ENCODE measurements at regions of chr19 and their contacts with region 1.

Region 1: DNA sequence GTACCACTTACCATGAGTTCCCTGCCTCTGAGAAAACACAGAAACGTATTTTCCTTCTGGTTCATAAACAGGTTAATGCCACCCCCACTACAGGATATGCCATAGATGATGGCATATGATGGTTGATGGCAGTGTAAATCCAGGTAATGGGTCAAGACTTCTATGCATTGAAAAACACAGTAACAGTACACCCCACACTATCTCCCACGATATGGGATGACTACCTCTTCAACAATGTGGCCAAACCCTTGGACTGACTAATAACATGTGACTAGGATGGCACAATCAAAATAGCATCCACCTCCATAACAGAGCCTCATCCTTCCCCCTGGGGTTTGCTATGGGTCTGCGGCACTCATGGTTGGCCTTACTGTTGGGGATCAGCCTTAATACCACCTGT is 22.0 kb downstream of the ZNF235 start:
- DNase-seq: no peak
- ATAC-seq: no peak
- H3K4me3 ChIP-seq: no peak overlapping the region
- H3K27ac ChIP-seq: no peak overlapping the region
- H3K4me1 ChIP-seq: no peaks in the 10 kb centered on the region
- H3K27me3 ChIP-seq: no peaks in the 10 kb centered on the region
- CTCF ChIP-seq: no peak
- POLR2A ChIP-seq: no peak

Region 2: GRCh38 chr19:44232867-44233266 is 50.0 kb before region 1 on chr19:
- intact Hi-C with region 1: loop called in 1 of 10 experiments (anchors 10 kb)
- DNase-seq: no peak
- ATAC-seq: no peak
- H3K4me3 ChIP-seq: no peak overlapping the region
- H3K27ac ChIP-seq: no peak overlapping the region
- H3K4me1 ChIP-seq: no peaks in the 10 kb centered on the region
- H3K27me3 ChIP-seq: no peaks in the 10 kb centered on the region
- CTCF ChIP-seq: no peak
- POLR2A ChIP-seq: no peak

Region 3: GRCh38 chr19:44374789-44375188 is 91.9 kb after region 1 on chr19:
- intact Hi-C with region 1: no loop called
- DNase-seq: no peak
- ATAC-seq: no peak
- H3K4me3 ChIP-seq: no peak overlapping the region
- H3K27ac ChIP-seq: no peak overlapping the region
- H3K4me1 ChIP-seq: no peaks in the 10 kb centered on the region
- H3K27me3 ChIP-seq: no peaks in the 10 kb centered on the region
- CTCF ChIP-seq: no peak
- POLR2A ChIP-seq: no peak